B cell (primary cell): ENCODE measurements at regions of chr16 and their contacts with region 1.

Region 1: DNA sequence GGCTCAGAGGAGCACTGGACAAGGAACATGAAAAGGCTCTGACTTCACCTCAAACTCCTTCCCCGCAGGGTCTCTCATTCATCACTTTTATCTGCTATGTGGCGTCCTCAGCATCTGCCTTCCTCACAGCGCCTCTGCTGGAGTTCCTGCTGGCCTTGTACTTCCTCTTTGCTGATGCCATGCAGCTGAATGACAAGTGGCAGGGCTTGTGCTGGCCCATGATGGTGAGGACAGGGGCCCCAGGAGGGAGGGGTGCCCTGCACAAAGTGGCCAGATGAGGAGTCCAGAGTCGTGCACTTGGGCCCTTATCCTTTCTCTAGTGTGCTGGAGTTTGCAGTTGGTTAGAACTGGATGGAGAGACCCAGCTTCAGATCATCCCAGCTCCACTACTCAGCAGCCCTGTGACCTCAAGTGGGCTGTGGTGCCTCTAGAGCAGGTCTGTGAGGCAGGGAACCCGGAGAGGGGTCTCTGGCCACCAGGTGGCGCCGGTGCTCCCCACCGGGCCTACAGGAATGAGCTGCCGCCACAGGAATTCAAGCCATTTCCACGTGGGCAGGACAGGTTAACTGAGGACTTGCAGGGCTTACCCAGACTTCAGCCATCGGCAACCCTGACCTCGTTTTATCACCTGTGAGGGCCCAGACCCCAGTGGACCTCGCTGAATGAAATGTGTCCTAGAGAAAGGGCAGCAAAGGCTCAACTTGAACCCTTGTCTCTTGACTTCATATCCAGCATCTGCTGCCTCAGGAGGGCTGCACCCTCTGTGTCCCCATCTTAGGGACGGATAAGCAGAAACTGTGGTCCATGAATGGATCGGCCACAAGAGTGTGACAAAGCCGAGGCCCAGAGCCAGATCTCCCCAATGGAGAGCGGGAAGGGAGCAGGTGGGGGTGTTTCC is 4.0 kb downstream of the CMTM3 start:
- DNase-seq: peak; percentile 74
- ATAC-seq: peak; percentile 16
- H3K4me3 ChIP-seq: no peak overlapping the region
- H3K4me3 Mint-ChIP-seq: no peak overlapping the region
- H3K27ac ChIP-seq: no peak overlapping the region
- H3K27ac Mint-ChIP-seq: no peak overlapping the region
- H3K4me1 ChIP-seq: peaks cover 39 to 44% of the 10 kb centered on the region in 2 donors
- H3K4me1 Mint-ChIP-seq: peaks cover 33% of the 10 kb centered on the region
- H3K27me3 ChIP-seq: peaks cover 0 to 33% (median 11%) of the 10 kb centered on the region in 4 experiments
- H3K27me3 Mint-ChIP-seq: peaks cover 21% of the 10 kb centered on the region
- CTCF ChIP-seq: peak; percentile 79

Region 2: GRCh38 chr16:66474750-66475199 is 133.7 kb before region 1 on chr16:
- CTCF ChIA-PET with region 1: interaction called, 20 read pairs
- POLR2A ChIA-PET with region 1: no interaction called
- intact Hi-C with region 1: loop called (anchors 1 kb)
- DNase-seq: peak; percentile 84
- ATAC-seq: peak; percentile 85
- H3K4me3 ChIP-seq: no peak overlapping the region
- H3K4me3 Mint-ChIP-seq: no peak overlapping the region
- H3K27ac ChIP-seq: no peak overlapping the region
- H3K27ac Mint-ChIP-seq: peak overlapping the region; percentile 21
- H3K4me1 ChIP-seq: peaks cover 16 to 21% of the 10 kb centered on the region in 2 donors
- H3K4me1 Mint-ChIP-seq: peaks cover 19% of the 10 kb centered on the region
- H3K27me3 ChIP-seq: peaks cover 0 to 10% (median 6%) of the 10 kb centered on the region in 4 experiments
- H3K27me3 Mint-ChIP-seq: peaks cover 22% of the 10 kb centered on the region
- CTCF ChIP-seq: peak; percentile 20

Region 3: GRCh38 chr16:66552286-66553177 is 56.0 kb before region 1 on chr16 and contains the start of gene CKLF:
- CTCF ChIA-PET with region 1: interaction called, 6 read pairs
- POLR2A ChIA-PET with region 1: interaction called, 9 read pairs
- intact Hi-C with region 1: loop called (anchors 2 kb)
- DNase-seq: peak; percentile 95
- ATAC-seq: peak; percentile 66
- H3K4me3 ChIP-seq: peak within 1 kb of the TSS; percentile 60 to 92 (median 71)
- H3K4me3 Mint-ChIP-seq: peak within 1 kb of the TSS; percentile 95
- H3K27ac ChIP-seq: peak within 1 kb of the TSS; percentile 71 to 75
- H3K27ac Mint-ChIP-seq: peak within 1 kb of the TSS; percentile 98
- H3K4me1 ChIP-seq: peaks cover 52 to 60% of the 10 kb centered on the region in 2 donors
- H3K4me1 Mint-ChIP-seq: peaks cover 79% of the 10 kb centered on the region
- H3K27me3 ChIP-seq: no peaks in the 10 kb centered on the region
- H3K27me3 Mint-ChIP-seq: no peaks in the 10 kb centered on the region
- CTCF ChIP-seq: no peak
- total RNA-seq, gene CKLF: 28.9 and 30.4 TPM in 2 replicates

Region 4: GRCh38 chr16:66588981-66589713 is 19.3 kb before region 1 on chr16:
- CTCF ChIA-PET with region 1: interaction called, 19 read pairs
- POLR2A ChIA-PET with region 1: no interaction called
- intact Hi-C with region 1: loop called (anchors 2 kb)
- DNase-seq: peak; percentile 79
- ATAC-seq: peak; percentile 90
- H3K4me3 ChIP-seq: no peak overlapping the region
- H3K4me3 Mint-ChIP-seq: peak overlapping the region; percentile 75
- H3K27ac ChIP-seq: no peak overlapping the region
- H3K27ac Mint-ChIP-seq: peak overlapping the region; percentile 59
- H3K4me1 ChIP-seq: peaks cover 24 to 34% of the 10 kb centered on the region in 2 donors
- H3K4me1 Mint-ChIP-seq: peaks cover 30% of the 10 kb centered on the region
- H3K27me3 ChIP-seq: peaks cover 0 to 20% (median 6%) of the 10 kb centered on the region in 4 experiments
- H3K27me3 Mint-ChIP-seq: peaks cover 9% of the 10 kb centered on the region
- CTCF ChIP-seq: peak; percentile 83

Region 5: DNA sequence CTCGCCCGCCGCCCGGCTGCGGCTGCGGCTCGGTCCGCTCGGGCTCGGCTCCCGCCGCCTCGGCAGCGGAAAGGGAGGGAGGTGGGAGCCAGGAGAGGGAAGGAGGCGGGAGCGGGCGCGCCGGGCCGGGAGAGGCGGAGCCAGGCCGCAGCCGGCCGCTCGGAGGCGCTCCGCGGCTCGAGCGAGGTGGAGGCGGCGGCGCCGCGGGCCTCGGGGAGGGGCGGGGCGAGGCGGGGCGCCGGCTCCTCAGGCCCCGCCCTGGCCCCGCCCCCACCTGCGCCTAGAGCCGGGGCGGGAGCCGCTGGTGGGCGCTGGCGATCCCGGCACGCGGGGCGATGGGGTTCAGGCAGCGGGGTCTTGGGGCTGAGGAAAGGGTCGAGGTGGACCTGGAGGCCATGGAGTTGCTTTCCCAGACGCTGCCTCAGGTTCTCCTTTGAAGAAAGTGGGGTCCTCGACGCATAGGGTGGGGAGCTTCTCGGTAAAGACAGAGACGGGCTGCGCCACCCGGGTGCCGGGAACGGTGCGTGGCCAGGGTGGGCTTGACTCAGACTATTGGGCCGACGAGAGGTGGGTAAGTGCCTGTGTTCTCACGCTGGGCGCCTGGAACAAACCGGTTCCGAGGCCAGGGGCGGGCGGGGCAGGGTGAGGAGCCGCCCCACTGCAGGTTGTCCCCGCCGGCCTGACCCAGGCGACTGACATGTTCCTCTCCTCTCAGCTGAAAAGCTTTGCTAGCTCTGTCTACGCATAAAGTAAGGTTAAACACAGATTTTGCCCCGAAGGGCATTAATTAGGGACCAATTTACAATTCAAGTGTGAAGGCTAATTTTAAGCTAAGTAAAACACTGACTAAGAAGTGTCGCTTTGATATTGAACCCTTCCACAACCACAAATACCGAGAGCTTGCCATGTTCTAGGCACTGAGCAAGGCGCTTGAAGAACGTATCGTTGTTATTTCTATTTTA is 88.5 kb after region 1 on chr16 and contains the start of gene CMTM4:
- CTCF ChIA-PET with region 1: no interaction called
- POLR2A ChIA-PET with region 1: no interaction called
- intact Hi-C with region 1: loop called (anchors 5 kb)
- DNase-seq: peak; percentile 89
- ATAC-seq: peak; percentile 98
- H3K4me3 ChIP-seq: peak within 1 kb of the TSS; percentile 34 to 83 (median 57)
- H3K4me3 Mint-ChIP-seq: peak within 1 kb of the TSS; percentile 88
- H3K27ac ChIP-seq: no peak within 1 kb of the TSS
- H3K27ac Mint-ChIP-seq: peak within 1 kb of the TSS; percentile 15
- H3K4me1 ChIP-seq: peaks cover 15 to 17% of the 10 kb centered on the region in 2 donors
- H3K4me1 Mint-ChIP-seq: peaks cover 17% of the 10 kb centered on the region
- H3K27me3 ChIP-seq: peaks cover 0 to 53% (median 30%) of the 10 kb centered on the region in 4 experiments
- H3K27me3 Mint-ChIP-seq: peaks cover 30% of the 10 kb centered on the region
- CTCF ChIP-seq: peak; percentile 32
- total RNA-seq, gene CMTM4: 0.59 and 0.68 TPM in 2 replicates

Region 6: GRCh38 chr16:66872943-66873684 is 264.6 kb after region 1 on chr16:
- CTCF ChIA-PET with region 1: interaction called, 6 read pairs
- POLR2A ChIA-PET with region 1: no interaction called
- intact Hi-C with region 1: loop called (anchors 5 kb)
- DNase-seq: peak; percentile 91
- ATAC-seq: peak; percentile 90
- H3K4me3 ChIP-seq: peak overlapping the region in 4 of 5 experiments; percentile 32 to 45 (median 44)
- H3K4me3 Mint-ChIP-seq: peak overlapping the region; percentile 77
- H3K27ac ChIP-seq: no peak overlapping the region
- H3K27ac Mint-ChIP-seq: peak overlapping the region; percentile 72
- H3K4me1 ChIP-seq: peaks cover 7 to 11% of the 10 kb centered on the region in 2 donors
- H3K4me1 Mint-ChIP-seq: peaks cover 14% of the 10 kb centered on the region
- H3K27me3 ChIP-seq: peaks cover 0 to 1% (median 0%) of the 10 kb centered on the region in 4 experiments
- H3K27me3 Mint-ChIP-seq: peaks cover 3% of the 10 kb centered on the region
- CTCF ChIP-seq: peak; percentile 92